AG04450 (cell line): ENCODE measurements at regions of chr3 and their contacts with region 1.

Region 1: GRCh38 chr3:47035634-47036033 is 56.2 kb downstream of the NBEAL2 start:
- DNase-seq: no peak
- H3K4me3 ChIP-seq: no peak overlapping the region
- H3K27ac ChIP-seq: no peak overlapping the region
- H3K27me3 ChIP-seq: no peaks in the 10 kb centered on the region
- CTCF ChIP-seq: no peak

Region 2: GRCh38 chr3:47164007-47164881 is 128.6 kb after region 1 on chr3 and contains the start of gene SETD2:
- CTCF ChIA-PET with region 1: no interaction called
- POLR2A ChIA-PET with region 1: interaction called, 10 read pairs
- DNase-seq: peak; percentile 69
- H3K4me3 ChIP-seq: peak within 1 kb of the TSS; percentile 77
- H3K27ac ChIP-seq: peak within 1 kb of the TSS; percentile 75
- H3K27me3 ChIP-seq: no peaks in the 10 kb centered on the region
- CTCF ChIP-seq: peak; percentile 31
- polyA plus RNA-seq, gene SETD2: 25.9 and 30.8 TPM in 2 replicates